HCT116 (cell line): ENCODE measurements at regions of chr10 and their contacts with region 1.

Region 1: GRCh38 chr10:52566471-52567246 is 205.9 kb downstream of the MBL2 start:
- DNase-seq: peak; percentile 35
- ATAC-seq: 0 out of 2 replicates have a peak, but pooled peaks have one; percentile 60
- H3K4me3 ChIP-seq: no peak overlapping the region
- H3K27ac ChIP-seq: peak overlapping the region; percentile 2; the same call in 1 of the 2 replicates
- H3K4me1 ChIP-seq: peaks cover 3 to 5% of the 10 kb centered on the region in 2 experiments; a peak in 3 of 4 replicates
- H3K27me3 ChIP-seq: no peaks in the 10 kb centered on the region
- CTCF ChIP-seq: peak; percentile 48 to 75 (median 58)
- POLR2A ChIP-seq: no peak
- RAD21 ChIP-seq: peak; percentile 77

Region 2: DNA sequence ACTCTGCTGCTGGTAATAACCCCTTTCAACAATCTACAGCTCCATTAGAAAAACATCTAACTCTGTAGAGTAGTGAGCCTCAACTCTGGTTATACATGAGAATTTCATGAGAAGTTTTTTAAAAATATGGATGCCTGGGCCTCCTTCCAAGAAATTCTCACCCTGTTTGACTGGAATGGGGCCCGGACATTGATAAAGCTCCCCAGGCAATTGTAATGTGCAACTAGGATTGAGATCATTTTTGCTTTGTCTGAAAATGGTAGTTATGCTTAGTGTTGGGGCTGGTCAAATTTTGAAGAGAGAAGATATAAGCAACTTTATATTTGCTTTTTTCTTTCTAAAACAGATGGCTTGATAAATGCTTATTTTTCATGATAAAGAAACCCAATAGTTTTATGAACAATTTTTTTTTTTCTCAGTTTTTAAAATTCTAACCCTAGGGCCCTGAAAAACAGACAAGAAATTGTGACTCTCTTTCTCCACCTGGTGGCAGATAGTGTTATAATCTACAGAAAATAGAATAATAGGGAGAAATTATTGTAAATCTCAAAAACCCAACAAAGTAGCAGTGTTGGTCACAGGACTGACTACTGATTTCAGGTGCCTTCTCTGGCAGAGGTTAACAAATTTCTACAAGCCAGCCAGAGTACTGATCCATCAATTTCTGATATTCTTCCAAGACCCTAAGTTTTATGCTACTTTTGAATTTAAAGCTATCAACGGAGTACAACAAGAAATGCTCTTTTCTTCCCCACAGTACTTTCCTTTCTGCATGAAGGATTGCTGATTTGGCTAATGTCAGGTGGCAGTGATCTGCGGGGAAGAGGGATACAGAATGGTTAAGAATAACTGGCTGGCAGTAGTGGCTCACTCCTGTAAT is 77.8 kb before region 1 on chr10:
- CTCF ChIA-PET with region 1: interaction called, 17 read pairs
- POLR2A ChIA-PET with region 1: no interaction called
- RAD21 ChIA-PET with region 1: no interaction called
- intact Hi-C with region 1: loop called (anchors 1 kb)
- DNase-seq: no peak
- ATAC-seq: peak; percentile 61; the same call in 1 of the 2 replicates
- H3K4me3 ChIP-seq: no peak overlapping the region
- H3K27ac ChIP-seq: peak overlapping the region; percentile 62; the same call in 1 of the 2 replicates
- H3K4me1 ChIP-seq: peaks cover 18 to 48% of the 10 kb centered on the region in 2 experiments
- H3K27me3 ChIP-seq: no peaks in the 10 kb centered on the region
- CTCF ChIP-seq: peak; percentile 30 to 66 (median 63); a peak in 4 of 6 replicates
- POLR2A ChIP-seq: no peak
- RAD21 ChIP-seq: peak; percentile 71